ENCODE measurements at regions of chr17 and their contacts with region 1.

Region 1: GRCh38 chr17:27797390-27798091 is 2.8 kb downstream of the NOS2 start:
- DNase-seq: no peak
- H3K4me3 ChIP-seq: no peak overlapping the region
- H3K27ac ChIP-seq: no peak overlapping the region
- H3K4me1 ChIP-seq: peaks cover 6% of the 10 kb centered on the region
- H3K27me3 ChIP-seq: peaks cover 18% of the 10 kb centered on the region
- CTCF ChIP-seq: peak; percentile 46

Region 2: DNA sequence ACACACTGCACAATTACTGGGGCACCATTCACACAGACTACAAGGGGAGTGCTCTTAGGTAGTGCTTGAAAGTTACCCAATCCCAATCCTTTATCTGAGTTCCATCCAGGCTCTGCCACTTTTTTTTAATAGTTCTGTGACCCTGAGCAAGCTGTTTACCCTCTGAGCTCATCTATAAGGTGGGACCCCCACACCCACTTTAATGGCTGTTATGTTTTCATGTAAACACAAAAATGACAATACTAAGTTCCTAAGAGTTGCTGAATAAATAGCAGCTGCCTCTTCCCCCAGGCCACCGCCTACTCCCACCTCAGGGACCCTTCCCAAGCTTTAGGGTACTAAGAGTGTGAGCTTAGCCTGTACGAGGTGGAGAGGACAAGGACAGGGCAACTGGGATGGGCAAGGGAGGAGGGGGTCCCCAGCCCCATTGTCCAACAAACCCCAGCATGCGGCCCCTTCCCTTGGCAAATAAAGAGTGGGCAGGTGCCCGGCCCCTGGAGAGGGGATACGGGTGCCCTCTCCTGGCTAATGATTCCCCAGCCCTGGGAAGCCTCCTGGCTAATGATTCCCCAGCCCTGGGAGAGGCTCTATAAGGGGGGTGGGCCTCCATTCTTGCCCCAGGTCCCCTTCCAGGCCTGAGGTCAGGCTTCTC is 690.5 kb after region 1 on chr17:
- CTCF ChIA-PET with region 1: no interaction called
- POLR2A ChIA-PET with region 1: no interaction called
- intact Hi-C with region 1: loop called (anchors 5 kb)
- DNase-seq: no peak
- H3K4me3 ChIP-seq: no peak overlapping the region
- H3K27ac ChIP-seq: no peak overlapping the region
- H3K4me1 ChIP-seq: no peaks in the 10 kb centered on the region
- H3K27me3 ChIP-seq: no peaks in the 10 kb centered on the region
- CTCF ChIP-seq: no peak